H1 (cell line): ENCODE measurements at regions of chrX and their contacts with region 1.

Region 1: GRCh38 chrX:18674788-18675735 is 3.2 kb upstream of the RS1 start:
- DNase-seq: peak; percentile 21 to 79
- H3K4me3 ChIP-seq: peak overlapping the region; percentile 48 to 73 (median 59)
- H3K27ac ChIP-seq: no peak overlapping the region
- H3K4me1 ChIP-seq: no peaks in the 10 kb centered on the region; a peak in 1 of 7 replicates
- H3K27me3 ChIP-seq: no peaks in the 10 kb centered on the region; a peak in 1 of 7 replicates
- CTCF ChIP-seq: no peak
- EP300 ChIP-seq: no peak
- POLR2A ChIP-seq: 0 out of 3 replicates have a peak, but pooled peaks of 1 of the 2 experiments have one; percentile 38
- RAD21 ChIP-seq: no peak

Region 2: GRCh38 chrX:18640686-18641085 is 34.4 kb before region 1 on chrX:
- CTCF ChIA-PET with region 1: interaction called, 10 read pairs
- POLR2A ChIA-PET with region 1: no interaction called
- DNase-seq: peak in 1 of 2 experiments; percentile 54
- H3K4me3 ChIP-seq: no peak overlapping the region; a peak in 1 of 8 replicates
- H3K27ac ChIP-seq: no peak overlapping the region
- H3K4me1 ChIP-seq: peaks cover 0 to 5% (median 0%) of the 10 kb centered on the region in 4 experiments; a peak in 2 of 7 replicates
- H3K27me3 ChIP-seq: no peaks in the 10 kb centered on the region
- CTCF ChIP-seq: no peak
- EP300 ChIP-seq: no peak
- POLR2A ChIP-seq: no peak
- RAD21 ChIP-seq: 0 out of 4 replicates have a peak, but pooled peaks of 1 of the 2 experiments have one; percentile 10

Region 3: DNA sequence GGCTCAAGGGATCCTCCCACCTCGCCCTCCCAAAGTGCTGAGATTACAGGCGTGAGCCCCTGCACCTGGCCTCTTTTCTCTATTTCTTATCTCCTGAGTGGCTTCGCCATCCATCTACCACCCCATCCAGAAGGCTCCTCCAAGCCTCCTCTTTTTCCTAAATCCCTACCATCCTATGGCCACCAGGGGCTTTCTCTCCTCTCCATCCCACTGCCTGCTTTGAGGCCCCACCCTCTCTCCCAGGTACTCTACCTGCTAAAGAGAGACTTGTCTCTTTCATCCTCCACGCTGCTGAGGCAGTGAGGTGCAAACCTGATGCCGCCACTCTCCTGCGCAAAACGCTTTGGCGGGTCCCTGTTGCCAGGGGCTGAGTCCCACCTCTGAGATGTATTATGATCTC is 10.1 kb before region 1 on chrX:
- CTCF ChIA-PET with region 1: interaction called, 15 read pairs
- POLR2A ChIA-PET with region 1: no interaction called
- DNase-seq: no peak
- H3K4me3 ChIP-seq: no peak overlapping the region
- H3K27ac ChIP-seq: no peak overlapping the region
- H3K4me1 ChIP-seq: no peaks in the 10 kb centered on the region
- H3K27me3 ChIP-seq: no peaks in the 10 kb centered on the region
- CTCF ChIP-seq: peak; percentile 30 to 55 (median 33)
- EP300 ChIP-seq: no peak
- POLR2A ChIP-seq: no peak
- RAD21 ChIP-seq: peak; percentile 37 to 55

Region 4: GRCh38 chrX:18687856-18688495 is 12.9 kb after region 1 on chrX:
- CTCF ChIA-PET with region 1: interaction called, 14 read pairs
- POLR2A ChIA-PET with region 1: no interaction called
- DNase-seq: no peak
- H3K4me3 ChIP-seq: no peak overlapping the region
- H3K27ac ChIP-seq: no peak overlapping the region
- H3K4me1 ChIP-seq: 0 out of 7 replicates have a peak, but pooled peaks cover 0 to 2% (median 0%) of the 10 kb centered on the region in 4 experiments
- H3K27me3 ChIP-seq: no peaks in the 10 kb centered on the region
- CTCF ChIP-seq: no peak
- EP300 ChIP-seq: no peak
- POLR2A ChIP-seq: no peak
- RAD21 ChIP-seq: no peak

Region 5: DNA sequence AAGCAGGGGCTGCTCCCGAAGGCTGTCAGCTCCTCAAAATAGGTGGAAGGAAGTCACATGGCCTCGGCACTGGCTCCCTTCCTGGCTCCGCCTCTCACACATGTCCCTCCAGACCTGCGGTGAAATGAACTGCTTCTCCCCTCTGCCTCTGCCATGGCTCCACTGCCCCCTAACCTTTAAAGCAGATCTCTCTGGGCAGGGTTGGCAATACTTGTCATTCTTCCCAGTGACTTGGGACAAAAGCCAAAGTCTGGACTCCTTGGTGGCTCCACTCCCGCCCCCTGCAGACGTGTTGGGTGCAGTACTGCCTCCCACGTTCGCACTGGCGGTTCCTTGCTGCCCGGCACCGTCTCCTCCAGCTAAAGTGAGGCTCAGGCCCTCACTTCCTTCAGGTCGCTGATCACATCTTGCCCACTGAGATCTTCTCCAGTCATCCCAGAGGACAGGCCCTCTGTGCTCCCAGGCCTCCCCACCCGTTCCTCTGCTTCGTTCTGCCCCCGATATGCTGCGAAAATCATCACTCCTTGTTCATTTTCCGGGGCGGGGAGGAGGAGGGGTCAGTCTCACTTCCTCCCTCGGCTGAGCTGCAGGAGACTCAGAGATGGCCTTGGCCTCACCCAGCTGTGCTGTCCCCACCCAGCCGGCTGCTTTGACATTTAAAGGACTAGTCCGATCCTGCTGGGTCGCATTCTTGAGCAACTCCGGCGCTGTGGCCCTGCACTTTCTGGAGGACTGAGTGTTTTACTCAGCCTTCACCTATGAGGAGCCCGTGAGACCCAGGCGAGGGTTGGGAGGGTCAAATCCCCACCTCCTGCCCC is 211.5 kb after region 1 on chrX:
- CTCF ChIA-PET with region 1: interaction called, 13 read pairs
- POLR2A ChIA-PET with region 1: no interaction called
- DNase-seq: peak in 1 of 2 experiments; percentile 59
- H3K4me3 ChIP-seq: peak overlapping the region; percentile 23 to 53 (median 30); a peak in 7 of 8 replicates
- H3K27ac ChIP-seq: no peak overlapping the region
- H3K4me1 ChIP-seq: peaks cover 0 to 10% (median 2%) of the 10 kb centered on the region in 4 experiments; a peak in 2 of 7 replicates
- H3K27me3 ChIP-seq: no peaks in the 10 kb centered on the region; a peak in 1 of 7 replicates
- CTCF ChIP-seq: peak in 2 of 3 experiments; percentile 33 to 48; a peak in 3 of 4 replicates
- EP300 ChIP-seq: no peak
- POLR2A ChIP-seq: no peak; a peak in 1 of 3 replicates
- RAD21 ChIP-seq: peak; percentile 36 to 50; a peak in 3 of 4 replicates

Region 6: GRCh38 chrX:18917831-18918230 is 242.8 kb after region 1 on chrX:
- CTCF ChIA-PET with region 1: no interaction called
- POLR2A ChIA-PET with region 1: no interaction called
- DNase-seq: no peak
- H3K4me3 ChIP-seq: no peak overlapping the region
- H3K27ac ChIP-seq: no peak overlapping the region
- H3K4me1 ChIP-seq: no peaks in the 10 kb centered on the region
- H3K27me3 ChIP-seq: no peaks in the 10 kb centered on the region
- CTCF ChIP-seq: no peak
- EP300 ChIP-seq: no peak
- POLR2A ChIP-seq: no peak
- RAD21 ChIP-seq: no peak